A673 (cell line): ENCODE measurements at regions of chr1 and their contacts with region 1.

Region 1: GRCh38 chr1:244599937-244600350 is 53.0 kb upstream of the DESI2 start:
- DNase-seq: peak; percentile 55
- H3K4me3 ChIP-seq: no peak overlapping the region
- H3K27ac ChIP-seq: no peak overlapping the region
- H3K4me1 ChIP-seq: no peaks in the 10 kb centered on the region
- H3K27me3 ChIP-seq: no peaks in the 10 kb centered on the region
- CTCF ChIP-seq: no peak

Region 2: GRCh38 chr1:244628789-244629188 is 28.8 kb after region 1 on chr1:
- CTCF ChIA-PET with region 1: no interaction called
- POLR2A ChIA-PET with region 1: interaction called, 3 read pairs
- intact Hi-C with region 1: loop called (anchors 1 kb)
- DNase-seq: no peak
- H3K4me3 ChIP-seq: no peak overlapping the region
- H3K27ac ChIP-seq: no peak overlapping the region
- H3K4me1 ChIP-seq: no peaks in the 10 kb centered on the region
- H3K27me3 ChIP-seq: peaks cover 6% of the 10 kb centered on the region
- CTCF ChIP-seq: no peak

Region 3: GRCh38 chr1:244796718-244797406 is 196.9 kb after region 1 on chr1:
- CTCF ChIA-PET with region 1: interaction called, 26 read pairs
- POLR2A ChIA-PET with region 1: interaction called, 5 read pairs
- intact Hi-C with region 1: loop called (anchors 1 kb)
- DNase-seq: peak; percentile 74
- H3K4me3 ChIP-seq: no peak overlapping the region
- H3K27ac ChIP-seq: no peak overlapping the region
- H3K4me1 ChIP-seq: no peaks in the 10 kb centered on the region
- H3K27me3 ChIP-seq: no peaks in the 10 kb centered on the region
- CTCF ChIP-seq: peak; percentile 88

Region 4: GRCh38 chr1:244807138-244807537 is 207.2 kb after region 1 on chr1:
- CTCF ChIA-PET with region 1: no interaction called
- POLR2A ChIA-PET with region 1: interaction called, 12 read pairs
- intact Hi-C with region 1: no loop called
- DNase-seq: peak; percentile 78
- H3K4me3 ChIP-seq: no peak overlapping the region
- H3K27ac ChIP-seq: no peak overlapping the region
- H3K4me1 ChIP-seq: no peaks in the 10 kb centered on the region
- H3K27me3 ChIP-seq: no peaks in the 10 kb centered on the region
- CTCF ChIP-seq: no peak

Region 5: GRCh38 chr1:245056913-245057312 is 457.0 kb after region 1 on chr1:
- CTCF ChIA-PET with region 1: interaction called, 10 read pairs
- POLR2A ChIA-PET with region 1: no interaction called
- intact Hi-C with region 1: no loop called
- DNase-seq: no peak
- H3K4me3 ChIP-seq: no peak overlapping the region
- H3K27ac ChIP-seq: no peak overlapping the region
- H3K4me1 ChIP-seq: peaks cover 3% of the 10 kb centered on the region
- H3K27me3 ChIP-seq: no peaks in the 10 kb centered on the region
- CTCF ChIP-seq: no peak

Region 6: GRCh38 chr1:245396615-245397014 is 796.7 kb after region 1 on chr1:
- CTCF ChIA-PET with region 1: no interaction called
- POLR2A ChIA-PET with region 1: no interaction called
- intact Hi-C with region 1: no loop called
- DNase-seq: no peak
- H3K4me3 ChIP-seq: no peak overlapping the region
- H3K27ac ChIP-seq: no peak overlapping the region
- H3K4me1 ChIP-seq: no peaks in the 10 kb centered on the region
- H3K27me3 ChIP-seq: peaks cover 51% of the 10 kb centered on the region
- CTCF ChIP-seq: no peak